Activated naive CD4-positive, alpha-beta T cell treated with anti-CD3 and anti-CD28 coated beads for 36 hours (primary cell): ENCODE measurements at regions of chr5 and their contacts with region 1.

Region 1: DNA sequence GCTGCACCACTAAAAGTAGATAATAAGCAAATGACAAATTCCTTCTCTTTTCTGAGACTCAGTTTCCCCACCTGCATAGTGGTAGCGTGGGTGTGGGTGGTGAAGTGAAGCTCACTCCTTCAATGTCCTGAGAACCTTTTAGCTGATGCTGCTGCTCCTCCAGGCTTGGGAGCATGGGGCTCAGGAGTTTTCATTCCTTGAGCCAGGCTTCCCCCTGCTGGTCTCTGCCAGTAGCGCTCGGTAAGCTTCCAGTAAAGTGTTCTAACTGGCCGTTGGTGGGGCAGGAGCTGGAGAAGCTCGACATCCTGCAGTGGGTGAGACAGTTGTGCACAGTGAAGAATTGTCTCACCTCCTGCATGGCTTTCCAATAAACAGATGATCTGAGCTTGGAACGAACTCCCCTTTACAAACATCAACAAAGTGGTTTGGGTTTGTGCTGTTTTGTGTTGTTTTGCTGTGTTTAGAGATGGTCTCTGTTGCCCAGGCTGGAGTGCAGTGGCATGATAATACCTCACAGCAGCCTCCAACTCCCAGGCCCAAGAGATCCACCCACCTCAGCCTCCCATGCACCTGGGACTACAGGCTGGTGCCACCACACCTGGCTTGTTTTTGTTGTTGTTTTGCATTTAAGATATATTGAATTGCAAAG is 34.6 kb downstream of the SPARC start:
- DNase-seq: peak; percentile 88
- H3K4me3 Mint-ChIP-seq: no peak overlapping the region
- H3K27ac Mint-ChIP-seq: no peak overlapping the region
- H3K4me1 Mint-ChIP-seq: no peaks in the 10 kb centered on the region
- H3K27me3 Mint-ChIP-seq: no peaks in the 10 kb centered on the region

Region 2: DNA sequence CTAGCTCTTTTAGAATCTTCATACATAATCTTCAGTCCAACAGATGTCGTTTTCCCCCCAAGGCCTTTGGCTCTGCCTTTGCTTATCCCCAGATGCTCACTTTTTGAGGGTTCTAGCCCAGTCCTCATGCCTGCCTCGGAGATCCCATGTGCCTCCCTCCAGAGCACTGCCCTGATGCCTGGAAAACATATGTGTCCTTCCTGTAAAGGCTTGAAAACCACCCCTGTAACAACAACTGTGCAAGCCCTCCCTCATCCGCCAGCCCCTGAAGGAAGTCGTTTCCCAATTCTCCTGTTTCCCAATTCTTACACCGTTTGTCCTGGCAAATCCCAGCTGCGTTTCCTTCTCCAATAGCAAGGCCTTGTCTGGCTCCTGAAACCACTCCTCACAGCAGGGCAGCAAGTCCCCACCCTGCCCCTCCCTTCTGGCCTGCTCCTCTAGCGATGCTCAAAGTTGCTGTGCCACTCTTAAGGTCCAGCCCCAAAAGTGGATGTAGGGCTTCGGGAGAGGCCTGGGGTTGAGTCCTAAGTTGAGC is 152.6 kb before region 1 on chr5:
- CTCF ChIA-PET with region 1: interaction called, 6 read pairs
- intact Hi-C with region 1: loop called (anchors 1 kb)
- DNase-seq: no peak
- H3K4me3 Mint-ChIP-seq: no peak overlapping the region
- H3K27ac Mint-ChIP-seq: no peak overlapping the region
- H3K4me1 Mint-ChIP-seq: peaks cover 4% of the 10 kb centered on the region
- H3K27me3 Mint-ChIP-seq: no peaks in the 10 kb centered on the region

Region 3: GRCh38 chr5:151523335-151523734 is 128.8 kb before region 1 on chr5:
- CTCF ChIA-PET with region 1: interaction called, 31 read pairs
- intact Hi-C with region 1: loop called (anchors 1 kb)
- DNase-seq: peak; percentile 78
- H3K4me3 Mint-ChIP-seq: no peak overlapping the region
- H3K27ac Mint-ChIP-seq: no peak overlapping the region
- H3K4me1 Mint-ChIP-seq: peaks cover 5% of the 10 kb centered on the region
- H3K27me3 Mint-ChIP-seq: no peaks in the 10 kb centered on the region